Vagina (tissue), 2 donors: ENCODE measurements at regions of chr7 and their contacts with region 1.

Region 1: GRCh38 chr7:77460057-77460486 is 43.9 kb upstream of the GSAP start:
- DNase-seq: no peak
- H3K4me3 ChIP-seq: no peak overlapping the region
- H3K27ac ChIP-seq: no peak overlapping the region
- H3K4me1 ChIP-seq: no peaks in the 10 kb centered on the region
- H3K27me3 ChIP-seq: no peaks in the 10 kb centered on the region
- CTCF ChIP-seq: no peak
- POLR2A ChIP-seq: no peak

Region 2: DNA sequence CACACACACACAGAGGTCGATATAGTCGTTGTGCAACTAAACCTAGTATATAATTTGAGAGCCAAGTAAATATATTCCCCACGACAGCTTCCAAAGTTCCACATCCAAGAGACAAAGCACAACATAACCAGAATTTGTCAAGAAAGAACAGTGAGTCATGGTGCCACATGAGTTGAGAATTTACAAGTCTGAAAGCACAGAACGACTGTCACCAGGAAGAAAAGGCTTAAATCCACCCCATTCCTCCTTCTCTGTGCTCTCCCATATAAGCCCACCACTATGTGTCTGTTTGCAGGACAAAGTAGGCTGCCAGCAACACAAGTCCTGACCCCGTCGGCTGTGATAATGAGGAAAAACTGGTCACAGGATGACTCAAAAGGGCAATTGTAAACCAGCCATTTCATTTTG is 76.7 kb before region 1 on chr7:
- intact Hi-C with region 1: no loop called
- DNase-seq: no peak
- H3K4me3 ChIP-seq: no peak overlapping the region
- H3K27ac ChIP-seq: no peak overlapping the region
- H3K4me1 ChIP-seq: no peaks in the 10 kb centered on the region
- H3K27me3 ChIP-seq: no peaks in the 10 kb centered on the region
- CTCF ChIP-seq: no peak
- POLR2A ChIP-seq: no peak

Region 3: GRCh38 chr7:77439572-77439971 is 20.5 kb before region 1 on chr7:
- intact Hi-C with region 1: no loop called
- DNase-seq: no peak
- H3K4me3 ChIP-seq: no peak overlapping the region
- H3K27ac ChIP-seq: no peak overlapping the region
- H3K4me1 ChIP-seq: no peaks in the 10 kb centered on the region
- H3K27me3 ChIP-seq: no peaks in the 10 kb centered on the region
- CTCF ChIP-seq: peak in 1 of 3 experiments; percentile 17
- POLR2A ChIP-seq: no peak

Region 4: GRCh38 chr7:77525231-77525630 is 65.2 kb after region 1 on chr7:
- intact Hi-C with region 1: loop called (anchors 10 kb)
- DNase-seq: no peak
- H3K4me3 ChIP-seq: no peak overlapping the region
- H3K27ac ChIP-seq: no peak overlapping the region
- H3K4me1 ChIP-seq: no peaks in the 10 kb centered on the region
- H3K27me3 ChIP-seq: no peaks in the 10 kb centered on the region
- CTCF ChIP-seq: no peak
- POLR2A ChIP-seq: no peak